ENCODE measurements at regions of chr11 and their contacts with region 1.

Region 1: DNA sequence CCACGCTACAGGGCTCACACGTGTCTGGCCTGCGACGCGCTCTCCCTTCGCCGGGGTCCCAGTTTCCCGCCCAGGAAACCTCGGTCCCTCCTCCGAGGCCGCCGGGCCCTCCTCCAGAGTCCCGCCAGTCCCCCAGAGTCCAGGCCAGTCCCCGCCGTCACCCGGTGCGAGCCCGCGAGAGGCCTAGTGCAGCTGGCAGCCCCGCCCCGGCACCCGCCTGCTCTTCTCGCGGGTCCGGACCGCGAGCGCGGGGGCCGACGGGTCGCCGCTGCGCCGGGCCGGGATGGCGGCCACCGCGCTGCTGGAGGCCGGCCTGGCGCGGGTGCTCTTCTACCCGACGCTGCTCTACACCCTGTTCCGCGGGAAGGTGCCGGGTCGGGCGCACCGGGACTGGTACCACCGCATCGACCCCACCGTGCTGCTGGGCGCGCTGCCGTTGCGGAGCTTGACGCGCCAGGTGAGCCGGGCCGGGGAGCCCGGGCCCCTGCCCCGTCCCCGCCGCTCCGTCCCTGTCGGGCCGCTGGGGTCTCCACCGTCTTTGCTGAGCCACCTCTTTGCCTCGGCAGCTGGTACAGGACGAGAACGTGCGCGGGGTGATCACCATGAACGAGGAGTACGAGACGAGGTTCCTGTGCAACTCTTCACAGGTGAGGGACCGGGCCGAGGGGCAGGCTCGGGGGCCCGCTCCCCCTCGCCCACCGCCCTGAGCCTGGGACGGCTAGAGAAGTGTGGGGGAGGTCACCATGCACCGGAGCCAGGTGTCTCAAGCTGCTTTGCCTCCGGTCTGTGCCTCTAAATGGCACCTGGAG is at the start of gene PTPMT1:
- DNase-seq: peak; percentile 92
- H3K4me3 Mint-ChIP-seq: peak within 1 kb of the TSS; percentile 89
- H3K27ac Mint-ChIP-seq: peak within 1 kb of the TSS; percentile 87
- H3K4me1 Mint-ChIP-seq: peaks cover 16% of the 10 kb centered on the region
- H3K27me3 Mint-ChIP-seq: no peaks in the 10 kb centered on the region
- total RNA-seq, gene PTPMT1: 53.9 and 54.9 TPM in 2 replicates

Region 2: DNA sequence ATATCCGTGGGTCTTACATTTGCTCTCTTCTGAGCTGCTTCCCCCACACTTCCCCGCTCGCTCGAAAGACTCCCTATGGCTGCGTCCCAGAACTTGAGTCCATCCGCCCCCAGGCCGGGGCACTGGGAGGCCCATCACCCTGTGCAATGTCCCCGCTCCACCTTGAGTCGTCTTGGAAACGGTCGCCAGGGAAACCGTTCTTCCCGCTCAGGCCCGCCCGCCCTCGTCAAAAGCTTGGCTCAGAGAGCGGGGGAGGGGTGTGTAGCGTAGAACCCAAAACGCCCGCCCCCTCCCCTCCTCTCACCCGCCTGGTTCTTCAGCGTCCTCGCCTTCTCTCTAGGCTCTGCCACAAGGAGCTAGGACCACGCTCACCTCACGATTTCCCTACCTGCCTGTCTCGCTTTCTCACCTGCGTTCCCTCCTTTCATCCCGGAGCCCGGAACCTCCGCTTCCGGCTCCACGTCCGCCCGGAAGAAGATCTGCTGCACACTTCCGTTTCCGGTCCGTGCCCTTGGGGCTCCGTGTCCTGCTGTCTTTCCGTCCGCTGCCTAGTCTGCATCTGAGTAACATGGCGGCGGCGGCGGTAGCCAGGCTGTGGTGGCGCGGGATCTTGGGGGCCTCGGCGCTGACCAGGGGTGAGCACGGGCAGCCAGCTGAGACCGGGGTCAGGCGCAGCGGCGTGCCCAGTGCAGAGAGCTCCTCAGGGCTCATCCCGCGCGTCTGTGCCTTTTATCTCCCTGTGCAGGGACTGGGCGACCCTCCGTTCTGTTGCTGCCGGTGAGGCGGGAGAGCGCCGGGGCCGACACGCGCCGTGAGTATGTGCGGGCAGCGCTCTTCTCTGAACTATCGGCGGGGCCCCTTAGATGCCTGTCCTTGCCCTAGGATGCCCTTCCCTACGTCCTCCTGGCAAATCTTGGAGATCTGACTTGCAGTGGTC is 13.2 kb after region 1 on chr11 and contains the starts of genes KBTBD4 and NDUFS3:
- intact Hi-C with region 1: loop called (anchors 1 kb)
- DNase-seq: peak; percentile 98
- H3K4me3 Mint-ChIP-seq: peak within 1 kb of the TSS; percentile 94
- H3K27ac Mint-ChIP-seq: peak within 1 kb of the TSS; percentile 96
- H3K4me1 Mint-ChIP-seq: peaks cover 27% of the 10 kb centered on the region
- H3K27me3 Mint-ChIP-seq: no peaks in the 10 kb centered on the region
- total RNA-seq, gene KBTBD4: 16.4 and 16.7 TPM in 2 replicates
- total RNA-seq, gene NDUFS3: 151 and 159 TPM in 2 replicates